Body of pancreas (tissue), 4 donors: ENCODE measurements at regions of chr6 and their contacts with region 1.

Region 1: DNA sequence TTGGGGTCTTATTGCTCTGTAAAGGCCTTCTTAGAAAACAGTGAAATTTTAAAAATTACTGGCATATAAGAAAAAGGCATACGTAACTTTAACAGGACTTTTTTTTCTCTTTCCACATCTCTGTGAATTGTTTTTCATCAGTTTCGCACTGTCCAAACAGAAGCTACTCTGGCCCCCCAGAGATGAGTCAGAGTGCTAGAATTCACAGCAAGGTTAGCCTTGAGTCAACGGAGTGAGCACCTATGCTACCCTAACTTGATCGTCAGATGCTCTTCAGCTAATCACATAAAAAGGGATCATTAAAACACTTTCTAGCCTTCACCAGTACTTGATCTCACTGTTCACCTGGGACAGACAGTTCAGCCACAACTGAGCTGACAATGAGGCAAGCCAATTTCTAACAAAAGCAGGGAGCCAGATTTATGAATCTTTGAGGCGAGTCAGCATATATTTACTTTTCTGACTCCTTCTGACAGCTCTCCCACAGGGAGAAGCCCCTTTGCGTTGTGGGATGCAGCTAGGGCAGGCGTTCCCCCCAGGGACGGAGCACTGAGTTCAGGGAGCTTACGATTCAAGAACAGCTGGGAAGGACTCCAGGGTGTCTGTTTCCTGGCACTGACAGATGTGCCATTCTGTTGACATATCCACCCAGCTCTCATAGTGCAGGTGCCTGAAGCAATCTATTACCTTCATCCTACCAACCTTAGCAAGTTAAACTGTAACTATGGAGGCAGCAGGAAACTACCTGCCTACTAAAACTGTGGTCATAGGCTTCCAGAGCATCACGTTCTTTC is 46.4 kb upstream of the SPDEF start:
- DNase-seq: peak in 3 of 4 donors; percentile 41 to 61 (median 49)
- ATAC-seq: peak; percentile 78
- H3K4me3 ChIP-seq: no peak overlapping the region
- H3K27ac ChIP-seq: peak overlapping the region in 3 of 4 donors; percentile 60 to 79 (median 68)
- H3K4me1 ChIP-seq: peaks cover 62% of the 10 kb centered on the region
- H3K27me3 ChIP-seq: no peaks in the 10 kb centered on the region
- CTCF ChIP-seq: no peak
- POLR2A ChIP-seq: no peak

Region 2: DNA sequence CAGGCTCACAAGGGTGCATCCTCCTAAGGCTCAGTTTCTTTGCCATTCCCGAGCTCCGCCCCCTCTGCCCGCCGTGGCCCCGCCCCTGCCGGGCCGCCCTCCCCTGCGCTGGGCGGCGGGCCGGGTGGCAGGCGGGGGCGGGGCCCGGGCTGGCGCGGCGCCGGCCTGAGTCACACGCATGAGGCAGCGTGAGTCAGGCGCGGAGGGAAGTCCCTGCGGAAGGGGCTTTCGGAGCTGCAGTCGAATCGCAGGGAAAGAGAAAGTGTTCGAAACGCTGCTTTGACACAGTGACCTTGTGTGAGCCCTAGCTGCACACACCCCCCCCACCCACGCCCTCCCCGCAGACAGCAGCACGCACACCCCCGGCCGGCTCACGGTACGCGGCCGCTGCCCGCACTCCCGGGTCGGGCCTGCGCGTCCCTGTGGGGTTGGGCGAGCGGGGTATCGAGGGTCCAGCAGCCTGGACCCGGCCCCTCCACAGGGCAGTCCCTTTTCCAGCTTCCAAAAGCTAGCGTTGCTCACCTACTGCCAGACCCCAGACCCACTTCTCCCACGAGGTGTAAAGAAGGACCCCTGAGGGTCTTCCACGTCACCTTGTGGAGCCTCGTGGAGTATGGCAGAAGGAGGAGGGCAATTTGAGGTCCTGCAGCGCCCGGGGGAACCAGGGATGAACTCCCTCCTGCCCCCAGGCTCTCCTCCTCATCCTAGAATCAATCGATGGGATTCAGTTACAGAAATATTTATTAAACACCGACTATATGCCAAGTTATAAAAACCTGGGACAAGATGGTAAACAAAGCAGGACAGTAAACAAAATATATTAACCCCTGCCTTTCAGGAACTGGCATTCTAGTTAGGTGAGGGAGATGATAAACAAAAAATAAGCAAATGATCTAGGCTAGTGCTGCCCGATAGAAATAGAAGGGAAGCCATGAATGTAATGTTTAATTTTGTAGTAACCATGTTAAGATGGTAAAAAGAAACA is 378.3 kb before region 1 on chr6:
- intact Hi-C with region 1: no loop called
- DNase-seq: peak; percentile 93 to 96 (median 96)
- ATAC-seq: peak; percentile 99
- H3K4me3 ChIP-seq: peak overlapping the region in 1 of 2 donors; percentile 54
- H3K27ac ChIP-seq: peak overlapping the region; percentile 89 to 100 (median 95)
- H3K4me1 ChIP-seq: peaks cover 12% of the 10 kb centered on the region
- H3K27me3 ChIP-seq: no peaks in the 10 kb centered on the region
- CTCF ChIP-seq: no peak
- POLR2A ChIP-seq: peak; percentile 68 to 82 (median 81)

Region 3: DNA sequence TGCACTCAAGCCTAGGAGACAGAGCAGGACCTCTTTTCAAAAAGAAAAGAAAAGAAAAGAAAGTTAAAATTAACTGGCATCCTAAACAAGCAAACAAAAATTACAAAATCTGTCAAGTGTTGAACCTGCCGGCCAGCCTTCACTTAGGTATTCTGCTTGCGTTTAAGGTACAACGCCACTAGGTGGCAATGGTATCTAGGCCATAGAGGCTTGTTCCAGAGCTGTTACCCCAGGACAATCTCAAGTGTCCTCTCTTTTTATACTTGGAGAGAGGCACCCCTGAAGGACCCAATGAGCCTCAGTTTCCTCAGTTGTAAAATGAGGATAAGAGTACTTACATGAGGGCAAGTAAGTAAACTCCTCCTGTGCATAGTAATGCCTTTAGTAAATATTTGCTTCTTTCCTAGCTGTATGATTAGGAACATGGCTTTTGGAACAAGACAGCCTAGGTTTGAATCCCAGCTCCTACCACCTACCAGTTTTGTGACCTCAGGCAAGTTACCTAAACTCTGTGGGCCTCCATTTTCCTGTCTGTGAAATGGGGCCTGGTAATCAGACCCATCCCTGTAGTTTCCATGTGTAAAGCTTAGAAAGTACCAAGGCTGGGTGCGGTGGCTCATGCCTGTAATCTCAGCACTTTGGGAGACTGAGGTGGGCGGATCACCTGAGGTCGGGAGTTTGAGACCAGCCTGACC is 142.5 kb before region 1 on chr6:
- intact Hi-C with region 1: loop called (anchors 10 kb)
- DNase-seq: peak; percentile 62 to 77 (median 66)
- ATAC-seq: peak; percentile 86
- H3K4me3 ChIP-seq: no peak overlapping the region
- H3K27ac ChIP-seq: no peak overlapping the region
- H3K4me1 ChIP-seq: peaks cover 4% of the 10 kb centered on the region
- H3K27me3 ChIP-seq: no peaks in the 10 kb centered on the region
- CTCF ChIP-seq: peak; percentile 22 to 79 (median 72)
- POLR2A ChIP-seq: no peak